Stomach (tissue), 19 donors: ENCODE measurements at regions of chr6 and their contacts with region 1.

Region 1: DNA sequence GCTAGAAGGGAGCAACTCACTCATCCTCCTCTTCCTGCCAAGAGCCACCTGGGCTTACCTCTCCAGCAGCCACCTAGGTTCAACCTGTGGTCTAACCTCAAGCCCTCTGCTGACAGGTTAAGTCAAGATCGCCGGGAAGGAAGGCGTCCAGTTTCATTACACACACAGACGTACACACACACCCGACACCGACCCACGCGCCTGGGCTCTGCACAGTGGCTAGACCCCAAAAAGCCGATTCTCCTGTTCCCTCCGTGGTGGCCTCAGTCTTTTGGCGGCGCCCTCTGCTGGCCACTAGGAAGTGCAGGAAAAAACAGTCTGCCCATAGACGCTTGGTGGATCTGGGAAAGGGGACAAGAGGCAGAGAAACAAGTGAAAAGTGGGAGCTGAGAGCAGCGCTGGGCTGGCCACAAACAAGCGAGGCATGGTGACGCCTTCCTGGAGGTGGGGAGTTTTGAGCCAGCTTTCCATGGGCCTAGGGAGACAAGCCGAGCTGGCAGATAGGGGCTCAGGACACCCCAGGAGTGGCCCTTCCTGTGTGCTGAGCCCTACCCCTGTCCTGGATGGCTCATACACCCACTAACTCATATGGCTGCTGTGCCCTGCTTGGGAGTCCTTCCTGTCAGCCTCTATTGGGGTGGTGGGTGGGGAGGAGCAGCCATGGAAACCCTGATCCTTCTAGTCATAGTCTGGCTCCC is 52.7 kb downstream of the MRPL14 start:
- DNase-seq: peak; percentile 74 to 96
- H3K4me3 ChIP-seq: no peak overlapping the region
- H3K27ac ChIP-seq: peak overlapping the region in 4 of 5 donors; percentile 5 to 82 (median 76)
- H3K4me1 ChIP-seq: peaks cover 29 to 56% (median 44%) of the 10 kb centered on the region in 4 donors
- H3K27me3 ChIP-seq: peaks cover 0 to 27% (median 0%) of the 10 kb centered on the region in 3 donors
- CTCF ChIP-seq: peak in 6 of 7 experiments; percentile 60 to 95 (median 89)
- EP300 ChIP-seq: no peak
- POLR2A ChIP-seq: no peak

Region 2: GRCh38 chr6:43667245-43668150 is 407.1 kb before region 1 on chr6:
- intact Hi-C with region 1: loop called (anchors 5 kb)
- DNase-seq: peak; percentile 92 to 95
- H3K4me3 ChIP-seq: no peak overlapping the region
- H3K27ac ChIP-seq: peak overlapping the region; percentile 39 to 74 (median 53)
- H3K4me1 ChIP-seq: peaks cover 39 to 55% (median 50%) of the 10 kb centered on the region in 4 donors
- H3K27me3 ChIP-seq: no peaks in the 10 kb centered on the region
- CTCF ChIP-seq: peak in 6 of 7 experiments; percentile 25 to 99 (median 96)
- EP300 ChIP-seq: no peak
- POLR2A ChIP-seq: no peak

Region 3: GRCh38 chr6:43746613-43747102 is 327.9 kb before region 1 on chr6:
- intact Hi-C with region 1: no loop called
- DNase-seq: peak in 1 of 2 donors; percentile 84
- H3K4me3 ChIP-seq: no peak overlapping the region
- H3K27ac ChIP-seq: no peak overlapping the region
- H3K4me1 ChIP-seq: peaks cover 0 to 5% (median 2%) of the 10 kb centered on the region in 4 donors
- H3K27me3 ChIP-seq: no peaks in the 10 kb centered on the region
- CTCF ChIP-seq: no peak
- EP300 ChIP-seq: no peak
- POLR2A ChIP-seq: no peak

Region 4: DNA sequence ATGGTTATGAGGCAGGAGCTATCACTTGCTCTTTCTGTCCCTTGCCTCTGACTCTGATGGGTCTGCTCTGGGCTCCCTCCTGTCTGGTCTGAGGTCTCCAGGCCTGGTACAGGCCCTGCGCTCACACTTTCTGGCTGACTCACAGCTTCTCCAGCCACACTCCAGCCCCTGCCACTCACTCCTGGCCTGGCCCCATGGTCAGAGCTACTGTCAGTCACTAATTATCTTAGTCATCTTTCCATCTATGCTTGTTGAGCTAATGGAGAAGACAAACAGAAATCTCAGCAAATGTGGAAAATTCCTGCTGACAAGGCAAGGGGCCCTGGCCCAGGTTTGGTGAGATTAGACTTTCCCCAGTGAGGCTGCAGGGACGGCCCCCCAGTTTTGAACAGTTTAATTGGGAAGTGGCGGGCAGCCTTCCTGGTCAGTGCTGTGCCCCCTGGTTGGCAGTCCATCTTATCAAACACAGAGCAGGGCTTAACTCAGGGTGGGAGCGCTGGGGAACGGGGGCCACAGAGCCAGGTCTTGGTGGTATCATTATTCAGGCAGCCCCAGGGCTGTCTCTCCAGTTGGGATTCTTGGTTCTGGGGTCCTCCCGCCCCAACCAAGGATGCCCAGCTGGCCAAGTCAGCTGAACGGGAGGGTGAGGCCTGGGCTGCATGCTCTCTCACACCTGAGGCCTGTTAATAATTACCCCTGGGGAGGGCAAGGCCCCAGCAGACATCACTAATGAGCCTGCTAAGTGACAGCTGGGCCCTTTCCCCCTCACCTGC is 241.2 kb before region 1 on chr6:
- intact Hi-C with region 1: no loop called
- DNase-seq: peak; percentile 64 to 84
- H3K4me3 ChIP-seq: no peak overlapping the region
- H3K27ac ChIP-seq: peak overlapping the region in 1 of 5 donors; percentile 11
- H3K4me1 ChIP-seq: peaks cover 14 to 57% (median 27%) of the 10 kb centered on the region in 4 donors
- H3K27me3 ChIP-seq: no peaks in the 10 kb centered on the region
- CTCF ChIP-seq: no peak
- EP300 ChIP-seq: no peak
- POLR2A ChIP-seq: no peak